ENCODE measurements at regions of chr1 and their contacts with region 1.

Region 1: DNA sequence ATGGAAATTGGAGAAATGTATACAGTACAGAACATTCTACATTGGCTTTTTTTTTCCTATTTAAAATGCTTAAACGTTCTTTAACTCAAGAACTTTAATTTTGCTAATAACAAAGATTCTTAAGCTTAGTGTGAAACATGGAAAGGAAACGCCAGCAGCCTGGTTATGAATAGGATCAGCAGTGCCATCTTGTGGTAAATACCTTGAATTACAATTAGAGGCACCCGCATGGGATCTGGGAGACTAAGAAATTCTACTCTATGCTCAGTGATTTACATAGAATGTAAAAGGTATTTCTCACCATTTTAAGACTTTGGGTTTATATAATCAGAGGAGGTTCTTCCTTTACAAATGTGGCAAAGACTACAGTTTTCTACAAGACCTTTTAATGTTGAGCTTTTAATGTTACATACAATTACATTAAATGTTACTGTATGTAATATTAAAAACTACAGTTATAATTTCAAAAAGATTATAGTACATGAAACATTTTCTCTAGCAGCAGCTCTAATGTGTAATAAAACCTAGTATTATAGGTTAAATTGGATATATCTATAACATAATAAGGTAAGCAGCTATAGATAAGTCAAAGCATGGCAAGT is 32.1 kb upstream of the APOBEC4 start:
- DNase-seq: peak; percentile 61 to 64
- ATAC-seq: peak in 1 of 2 experiments; percentile 80; a peak in 3 of 6 replicates
- H3K4me3 ChIP-seq: no peak overlapping the region
- H3K27ac ChIP-seq: no peak overlapping the region; a peak in 1 of 6 replicates
- H3K4me1 ChIP-seq: 0 out of 3 replicates have a peak, but pooled peaks cover 5% of the 10 kb centered on the region
- CTCF ChIP-seq: peak; percentile 85
- EP300 ChIP-seq: no peak
- POLR2A ChIP-seq: no peak
- RAD21 ChIP-seq: peak; percentile 75

Region 2: GRCh38 chr1:183590244-183591191 is 94.7 kb before region 1 on chr1 and contains the start of gene NCF2:
- CTCF ChIA-PET with region 1: no interaction called
- POLR2A ChIA-PET with region 1: no interaction called
- DNase-seq: no peak
- ATAC-seq: peak in 1 of 2 experiments; percentile 49; a peak in 1 of 6 replicates
- H3K4me3 ChIP-seq: no peak within 1 kb of the TSS
- H3K27ac ChIP-seq: 0 out of 6 replicates have a peak within 1 kb of the TSS, but pooled peaks of 1 of the 2 experiments have one; percentile 13
- H3K4me1 ChIP-seq: peaks cover 7% of the 10 kb centered on the region; the same call in 2 of the 3 replicates
- CTCF ChIP-seq: no peak
- EP300 ChIP-seq: no peak
- POLR2A ChIP-seq: no peak
- RAD21 ChIP-seq: no peak
- polyA plus RNA-seq, gene NCF2: 4.5 and 5.5 TPM in 2 replicates

Region 3: GRCh38 chr1:183646776-183647175 is 38.4 kb before region 1 on chr1:
- CTCF ChIA-PET with region 1: interaction called, 86 read pairs
- POLR2A ChIA-PET with region 1: no interaction called
- DNase-seq: no peak
- ATAC-seq: no peak
- H3K4me3 ChIP-seq: no peak overlapping the region
- H3K27ac ChIP-seq: no peak overlapping the region
- H3K4me1 ChIP-seq: no peaks in the 10 kb centered on the region
- CTCF ChIP-seq: no peak
- EP300 ChIP-seq: no peak
- POLR2A ChIP-seq: no peak
- RAD21 ChIP-seq: no peak

Region 4: DNA sequence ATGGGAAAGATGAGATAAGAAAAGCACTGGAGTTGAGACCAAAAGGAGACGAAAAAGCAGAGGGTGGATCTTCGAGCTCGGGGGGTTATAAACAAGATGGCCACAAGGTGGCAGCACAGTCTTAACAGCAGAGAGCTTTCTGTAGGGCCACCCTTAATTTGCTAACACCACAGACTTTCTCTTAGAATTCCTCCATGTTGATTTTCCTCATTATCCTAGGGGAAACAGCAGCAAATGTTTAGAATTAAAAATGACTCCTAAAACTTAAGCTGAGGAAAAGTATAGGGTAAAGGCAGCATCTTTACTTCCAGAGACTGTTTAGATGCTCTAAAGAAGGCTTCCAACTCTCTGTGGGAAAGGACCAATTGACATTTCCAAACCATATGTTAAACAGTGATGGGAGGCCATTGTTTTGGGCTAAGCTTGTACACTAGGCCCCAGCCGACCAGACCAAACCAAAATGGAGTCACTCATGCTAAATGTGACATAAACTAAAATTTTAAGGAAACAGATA is 29.6 kb before region 1 on chr1:
- CTCF ChIA-PET with region 1: interaction called, 86 read pairs
- POLR2A ChIA-PET with region 1: no interaction called
- DNase-seq: peak; percentile 74 to 79
- ATAC-seq: peak; percentile 93 to 97
- H3K4me3 ChIP-seq: no peak overlapping the region
- H3K27ac ChIP-seq: peak overlapping the region; percentile 16 to 41; a peak in 2 of 6 replicates
- H3K4me1 ChIP-seq: peaks cover 4% of the 10 kb centered on the region; the same call in 1 of the 3 replicates
- CTCF ChIP-seq: peak; percentile 97
- EP300 ChIP-seq: no peak
- POLR2A ChIP-seq: no peak
- RAD21 ChIP-seq: peak; percentile 92 to 95

Region 5: DNA sequence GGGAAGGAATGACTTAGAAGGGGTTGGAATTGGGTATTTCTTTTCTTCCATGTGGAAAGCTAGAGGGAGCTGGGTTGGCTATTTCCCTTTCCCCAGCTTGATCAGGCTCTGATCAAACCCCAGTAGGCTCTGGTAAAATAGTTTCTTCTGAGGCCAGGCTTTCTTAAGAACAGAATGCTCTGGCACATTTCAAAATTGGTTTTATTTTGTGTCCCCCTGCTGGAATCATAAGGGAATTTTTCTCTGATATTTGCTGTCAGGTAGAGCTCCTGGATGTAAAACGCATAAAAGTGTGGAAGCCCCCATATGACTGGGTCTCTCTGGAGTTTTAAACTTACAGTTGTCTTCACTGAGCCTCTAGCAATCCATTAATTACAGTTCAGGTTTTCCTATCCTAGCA is 15.0 kb before region 1 on chr1:
- CTCF ChIA-PET with region 1: interaction called, 31 read pairs
- POLR2A ChIA-PET with region 1: no interaction called
- DNase-seq: no peak
- ATAC-seq: no peak
- H3K4me3 ChIP-seq: no peak overlapping the region
- H3K27ac ChIP-seq: no peak overlapping the region
- H3K4me1 ChIP-seq: no peaks in the 10 kb centered on the region
- CTCF ChIP-seq: no peak
- EP300 ChIP-seq: no peak
- POLR2A ChIP-seq: no peak
- RAD21 ChIP-seq: 0 out of 5 replicates have a peak, but pooled peaks of 1 of the 2 experiments have one; percentile 6

Region 6: GRCh38 chr1:183699616-183700160 is 14.5 kb after region 1 on chr1:
- CTCF ChIA-PET with region 1: interaction called, 44 read pairs
- POLR2A ChIA-PET with region 1: no interaction called
- DNase-seq: peak; percentile 63 to 97
- ATAC-seq: peak; percentile 95 to 97
- H3K4me3 ChIP-seq: no peak overlapping the region
- H3K27ac ChIP-seq: peak overlapping the region; percentile 86 to 89
- H3K4me1 ChIP-seq: peaks cover 33% of the 10 kb centered on the region
- CTCF ChIP-seq: no peak
- EP300 ChIP-seq: peak; percentile 93 to 94
- POLR2A ChIP-seq: no peak
- RAD21 ChIP-seq: peak; percentile 22 to 67